ENCODE measurements at regions of chr6 and their contacts with region 1.

Region 1: GRCh38 chr6:132279592-132280139 is 121.6 kb downstream of the MOXD1 start:
- DNase-seq: peak in 1 of 2 donors; percentile 74
- H3K4me3 ChIP-seq: peak overlapping the region; percentile 50 to 52
- H3K27ac ChIP-seq: no peak overlapping the region
- H3K4me1 ChIP-seq: no peaks in the 10 kb centered on the region
- H3K27me3 ChIP-seq: no peaks in the 10 kb centered on the region
- CTCF ChIP-seq: peak; percentile 83 to 87 (median 86)

Region 2: DNA sequence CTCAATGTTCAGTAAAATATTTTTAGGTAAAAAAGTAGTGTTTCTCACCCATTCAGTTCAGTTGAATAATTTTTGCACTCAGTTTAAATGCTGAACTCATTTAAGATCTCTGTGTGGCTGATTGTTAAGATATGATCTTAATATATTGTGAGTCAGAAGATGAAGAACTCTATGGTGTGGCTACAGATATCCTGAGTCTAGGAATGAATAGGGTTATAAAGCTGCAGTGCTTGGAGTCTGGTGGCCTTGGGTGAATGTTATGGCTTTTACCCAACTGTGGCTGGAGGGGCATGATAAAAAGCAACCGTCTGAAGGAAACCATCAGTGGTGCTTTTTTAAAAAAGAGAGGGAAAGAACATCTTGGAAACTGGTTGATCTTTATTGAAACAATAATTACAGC is 394.4 kb before region 1 on chr6:
- intact Hi-C with region 1: no loop called
- DNase-seq: no peak
- H3K4me3 ChIP-seq: no peak overlapping the region
- H3K27ac ChIP-seq: peak overlapping the region in 1 of 2 donors; percentile 13
- H3K4me1 ChIP-seq: peaks cover 0 to 3% of the 10 kb centered on the region in 2 donors
- H3K27me3 ChIP-seq: no peaks in the 10 kb centered on the region
- CTCF ChIP-seq: no peak

Region 3: GRCh38 chr6:131914967-131915751 is 364.5 kb before region 1 on chr6:
- intact Hi-C with region 1: loop called (anchors 5 kb)
- DNase-seq: peak in 1 of 2 donors; percentile 81
- H3K4me3 ChIP-seq: no peak overlapping the region
- H3K27ac ChIP-seq: no peak overlapping the region
- H3K4me1 ChIP-seq: no peaks in the 10 kb centered on the region
- H3K27me3 ChIP-seq: no peaks in the 10 kb centered on the region
- CTCF ChIP-seq: peak; percentile 40 to 85 (median 82)

Region 4: GRCh38 chr6:132300323-132300949 is 20.8 kb after region 1 on chr6:
- intact Hi-C with region 1: loop called (anchors 2 kb)
- DNase-seq: no peak
- H3K4me3 ChIP-seq: no peak overlapping the region
- H3K27ac ChIP-seq: no peak overlapping the region
- H3K4me1 ChIP-seq: no peaks in the 10 kb centered on the region
- H3K27me3 ChIP-seq: no peaks in the 10 kb centered on the region
- CTCF ChIP-seq: peak in 2 of 3 experiments; percentile 29 to 51

Region 5: GRCh38 chr6:132391391-132392271 is 112.0 kb after region 1 on chr6:
- intact Hi-C with region 1: no loop called
- DNase-seq: no peak
- H3K4me3 ChIP-seq: no peak overlapping the region
- H3K27ac ChIP-seq: no peak overlapping the region
- H3K4me1 ChIP-seq: no peaks in the 10 kb centered on the region
- H3K27me3 ChIP-seq: no peaks in the 10 kb centered on the region
- CTCF ChIP-seq: no peak

Region 6: GRCh38 chr6:132424827-132425575 is 145.3 kb after region 1 on chr6:
- intact Hi-C with region 1: no loop called
- DNase-seq: no peak
- H3K4me3 ChIP-seq: no peak overlapping the region
- H3K27ac ChIP-seq: no peak overlapping the region
- H3K4me1 ChIP-seq: no peaks in the 10 kb centered on the region
- H3K27me3 ChIP-seq: no peaks in the 10 kb centered on the region
- CTCF ChIP-seq: no peak

Region 7: GRCh38 chr6:132483779-132484679 is 204.4 kb after region 1 on chr6:
- intact Hi-C with region 1: loop called (anchors 1 kb)
- DNase-seq: no peak
- H3K4me3 ChIP-seq: no peak overlapping the region
- H3K27ac ChIP-seq: no peak overlapping the region
- H3K4me1 ChIP-seq: peaks cover 0 to 12% of the 10 kb centered on the region in 2 donors
- H3K27me3 ChIP-seq: no peaks in the 10 kb centered on the region
- CTCF ChIP-seq: peak; percentile 60 to 78 (median 74)